GM12878 (cell line): ENCODE measurements at regions of chr16 and their contacts with region 1.

Region 1: GRCh38 chr16:53549970-53550690 is 47.1 kb upstream of the AKTIP start:
- DNase-seq: peak; percentile 40
- ATAC-seq: peak; percentile 89
- H3K4me3 ChIP-seq: no peak overlapping the region
- H3K27ac ChIP-seq: no peak overlapping the region
- H3K4me1 ChIP-seq: no peaks in the 10 kb centered on the region
- H3K27me3 ChIP-seq: no peaks in the 10 kb centered on the region; a peak in 2 of 4 replicates
- CTCF ChIP-seq: peak; percentile 66 to 90 (median 70)
- EP300 ChIP-seq: no peak
- POLR2A ChIP-seq: no peak
- RAD21 ChIP-seq: peak; percentile 85

Region 2: DNA sequence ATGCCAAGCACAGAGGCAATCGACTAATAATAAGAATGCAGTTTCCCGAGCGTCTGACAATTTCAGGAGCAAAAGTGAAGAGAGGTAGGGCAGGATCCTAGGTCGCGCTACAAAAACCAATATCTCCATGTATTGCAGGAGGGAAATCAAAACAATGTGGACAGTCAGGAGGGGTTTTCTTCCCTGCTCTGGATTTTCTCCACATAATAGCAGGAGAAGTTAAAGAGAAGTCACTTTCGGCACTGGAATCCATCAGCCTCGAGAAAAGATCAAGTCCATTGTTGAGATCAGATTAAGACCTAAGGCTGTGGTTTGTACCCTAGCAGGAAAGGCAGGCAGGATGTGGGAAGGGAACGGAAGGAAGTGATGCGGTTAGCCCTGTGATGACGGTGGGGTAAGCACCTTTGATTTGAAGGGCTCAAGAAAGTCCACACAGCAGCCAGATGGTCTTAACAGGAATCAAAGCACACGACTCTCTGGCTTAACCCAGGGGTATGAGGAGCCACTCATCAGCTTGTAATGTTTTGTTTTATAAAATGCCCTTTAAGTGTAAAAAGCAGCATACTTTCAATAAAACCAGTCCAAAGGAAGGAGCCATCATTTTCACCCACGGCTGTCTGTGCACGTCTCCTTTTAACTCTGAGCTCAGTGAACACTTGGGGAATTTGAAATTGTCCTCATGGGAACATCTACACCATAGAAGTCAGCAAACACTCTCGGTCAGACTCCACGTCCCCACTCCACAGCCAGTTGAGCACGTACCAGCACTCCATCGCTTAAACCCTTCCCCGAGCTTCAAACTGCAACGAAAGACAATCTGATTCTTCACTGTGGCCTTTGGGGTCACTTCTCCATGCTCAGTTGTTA is 31.3 kb before region 1 on chr16:
- CTCF ChIA-PET with region 1: interaction called, 10 read pairs
- POLR2A ChIA-PET with region 1: no interaction called
- RAD21 ChIA-PET with region 1: interaction called, 7 read pairs
- SMC1A ChIA-PET with region 1: interaction called, 5 read pairs
- in situ Hi-C with region 1: no loop called
- intact Hi-C with region 1: no loop called
- DNase-seq: peak; percentile 97
- ATAC-seq: peak; percentile 94
- H3K4me3 ChIP-seq: peak overlapping the region; percentile 44; the same call in 1 of the 2 replicates
- H3K27ac ChIP-seq: peak overlapping the region; percentile 94
- H3K4me1 ChIP-seq: peaks cover 21% of the 10 kb centered on the region
- H3K27me3 ChIP-seq: no peaks in the 10 kb centered on the region
- CTCF ChIP-seq: no peak
- EP300 ChIP-seq: peak; percentile 82 to 85
- POLR2A ChIP-seq: peak; percentile 65
- RAD21 ChIP-seq: no peak

Region 3: GRCh38 chr16:53672461-53672860 is 122.3 kb after region 1 on chr16:
- CTCF ChIA-PET with region 1: no interaction called
- POLR2A ChIA-PET with region 1: no interaction called
- RAD21 ChIA-PET with region 1: no interaction called
- SMC1A ChIA-PET with region 1: no interaction called
- in situ Hi-C with region 1: no loop called
- intact Hi-C with region 1: no loop called
- DNase-seq: no peak
- ATAC-seq: no peak
- H3K4me3 ChIP-seq: no peak overlapping the region
- H3K27ac ChIP-seq: no peak overlapping the region
- H3K4me1 ChIP-seq: no peaks in the 10 kb centered on the region
- H3K27me3 ChIP-seq: no peaks in the 10 kb centered on the region
- CTCF ChIP-seq: no peak
- EP300 ChIP-seq: no peak
- POLR2A ChIP-seq: no peak
- RAD21 ChIP-seq: no peak

Region 4: GRCh38 chr16:53892155-53892554 is 342.0 kb after region 1 on chr16:
- CTCF ChIA-PET with region 1: interaction called, 10 read pairs
- POLR2A ChIA-PET with region 1: no interaction called
- RAD21 ChIA-PET with region 1: interaction called, 3 read pairs
- SMC1A ChIA-PET with region 1: interaction called, 5 read pairs
- in situ Hi-C with region 1: no loop called
- intact Hi-C with region 1: loop called (anchors 10 kb)
- DNase-seq: no peak
- ATAC-seq: peak; percentile 82
- H3K4me3 ChIP-seq: no peak overlapping the region
- H3K27ac ChIP-seq: no peak overlapping the region
- H3K4me1 ChIP-seq: no peaks in the 10 kb centered on the region
- H3K27me3 ChIP-seq: no peaks in the 10 kb centered on the region
- CTCF ChIP-seq: peak; percentile 52 to 61 (median 59)
- EP300 ChIP-seq: no peak
- POLR2A ChIP-seq: no peak
- RAD21 ChIP-seq: peak; percentile 71

Region 5: DNA sequence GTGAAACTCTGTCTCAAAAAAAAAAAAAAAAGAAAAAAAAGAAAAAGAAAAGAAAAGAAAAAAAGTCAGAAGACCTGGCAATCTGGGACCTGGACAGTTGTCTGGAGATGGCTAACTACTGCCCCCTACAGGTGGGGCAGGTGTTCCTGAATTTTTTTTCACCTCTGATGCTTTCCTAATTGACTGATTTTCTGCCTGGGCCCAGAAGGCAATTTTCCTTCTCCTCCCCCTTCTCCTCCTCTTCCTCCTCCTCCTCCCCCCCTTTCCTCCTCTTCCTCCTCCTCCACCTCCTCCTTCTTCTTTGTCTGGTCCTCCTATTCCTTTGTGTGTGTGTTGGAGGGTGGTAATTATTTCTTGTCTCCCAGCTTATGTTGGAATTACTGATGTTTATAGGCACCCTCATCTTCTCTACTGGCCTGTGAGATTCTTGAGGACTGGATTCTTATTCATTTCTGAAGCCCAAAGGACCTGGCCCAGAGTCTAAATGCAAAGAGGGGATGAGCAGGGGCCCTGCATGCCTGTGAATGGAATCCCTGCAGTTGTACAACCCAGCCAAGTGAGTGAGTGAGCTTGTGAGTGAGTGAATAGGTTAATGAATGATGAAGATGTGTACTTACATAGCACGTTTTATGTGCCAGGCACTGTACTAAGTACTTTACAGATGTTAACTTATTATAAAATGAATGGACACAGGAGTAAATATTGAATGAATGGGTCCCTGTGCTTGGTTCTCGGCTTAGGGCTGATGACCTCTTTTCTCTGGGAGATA is 1407.5 kb after region 1 on chr16:
- CTCF ChIA-PET with region 1: interaction called, 4 read pairs
- POLR2A ChIA-PET with region 1: no interaction called
- RAD21 ChIA-PET with region 1: no interaction called
- SMC1A ChIA-PET with region 1: no interaction called
- in situ Hi-C with region 1: no loop called
- intact Hi-C with region 1: loop called (anchors 5 kb)
- DNase-seq: no peak
- ATAC-seq: no peak
- H3K4me3 ChIP-seq: no peak overlapping the region
- H3K27ac ChIP-seq: no peak overlapping the region
- H3K4me1 ChIP-seq: no peaks in the 10 kb centered on the region
- H3K27me3 ChIP-seq: no peaks in the 10 kb centered on the region
- CTCF ChIP-seq: peak; percentile 36 to 47 (median 43); a peak in 5 of 6 replicates
- EP300 ChIP-seq: no peak
- POLR2A ChIP-seq: no peak
- RAD21 ChIP-seq: peak; percentile 43